Activated CD4-positive, alpha-beta T cell treated with anti-CD3 and anti-CD28 coated beads, Interleukin-2, amount 10 ng/mL, durations not matched to agents 24 days and 14 days (primary cell): ENCODE measurements at regions of chr15 and their contacts with region 1.

Region 1: DNA sequence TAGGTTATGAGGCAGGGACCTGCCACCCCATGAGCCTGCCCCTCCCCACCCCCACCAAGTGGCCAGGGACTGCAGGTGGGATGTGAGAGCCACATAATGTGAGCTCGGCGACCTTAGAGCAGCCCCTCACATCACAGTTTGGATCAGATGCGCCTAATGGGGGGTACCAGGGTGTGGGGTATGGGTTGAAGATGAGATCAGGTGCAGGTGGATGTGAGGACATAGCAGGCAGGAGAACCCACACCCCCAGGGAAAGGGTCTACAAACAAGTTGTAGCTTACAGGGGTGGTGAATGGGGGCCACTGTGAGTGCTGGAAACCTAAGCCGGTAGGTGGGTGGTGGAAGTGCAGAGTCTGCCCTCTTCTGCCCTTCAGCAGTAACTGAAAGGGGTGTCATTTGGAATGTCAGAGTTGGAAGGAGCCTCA is 94.0 kb downstream of the CORO2B start:
- DNase-seq: no peak
- H3K4me3 Mint-ChIP-seq: no peak overlapping the region
- H3K27ac Mint-ChIP-seq: no peak overlapping the region
- H3K4me1 Mint-ChIP-seq: peaks cover 3% of the 10 kb centered on the region
- H3K27me3 Mint-ChIP-seq: peaks cover 23% of the 10 kb centered on the region

Region 2: DNA sequence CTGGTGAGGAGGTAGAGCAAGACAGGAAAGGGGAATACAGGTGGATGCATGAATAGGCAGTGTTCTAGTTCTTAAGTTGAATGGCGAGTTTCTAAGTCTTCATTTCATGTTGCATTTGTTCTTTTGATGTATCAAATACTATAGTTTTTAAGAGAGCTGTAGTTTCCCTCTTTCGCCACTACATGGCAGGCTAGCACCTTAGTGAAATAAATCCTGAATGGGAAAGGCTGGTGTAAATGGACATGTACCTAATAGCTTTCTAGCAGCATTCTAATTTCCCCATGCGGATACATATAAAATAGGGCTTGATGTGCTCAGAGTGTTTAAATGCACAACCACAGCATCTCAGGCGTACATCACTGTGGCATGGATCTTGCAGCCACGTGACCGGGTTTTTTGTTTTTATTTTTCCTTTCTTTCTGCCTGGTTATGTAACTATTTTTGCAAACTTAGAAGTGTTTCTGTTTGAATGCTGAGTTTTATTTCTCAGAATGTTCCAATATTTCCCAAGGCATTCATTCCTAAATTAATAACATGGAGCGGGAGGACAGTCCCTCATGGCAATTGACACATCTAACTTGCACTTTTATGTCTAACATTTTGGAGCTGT is 419.8 kb before region 1 on chr15:
- intact Hi-C with region 1: loop called (anchors 10 kb)
- DNase-seq: peak; percentile 84
- H3K4me3 Mint-ChIP-seq: no peak overlapping the region
- H3K27ac Mint-ChIP-seq: no peak overlapping the region
- H3K4me1 Mint-ChIP-seq: peaks cover 8% of the 10 kb centered on the region
- H3K27me3 Mint-ChIP-seq: peaks cover 31% of the 10 kb centered on the region

Region 3: DNA sequence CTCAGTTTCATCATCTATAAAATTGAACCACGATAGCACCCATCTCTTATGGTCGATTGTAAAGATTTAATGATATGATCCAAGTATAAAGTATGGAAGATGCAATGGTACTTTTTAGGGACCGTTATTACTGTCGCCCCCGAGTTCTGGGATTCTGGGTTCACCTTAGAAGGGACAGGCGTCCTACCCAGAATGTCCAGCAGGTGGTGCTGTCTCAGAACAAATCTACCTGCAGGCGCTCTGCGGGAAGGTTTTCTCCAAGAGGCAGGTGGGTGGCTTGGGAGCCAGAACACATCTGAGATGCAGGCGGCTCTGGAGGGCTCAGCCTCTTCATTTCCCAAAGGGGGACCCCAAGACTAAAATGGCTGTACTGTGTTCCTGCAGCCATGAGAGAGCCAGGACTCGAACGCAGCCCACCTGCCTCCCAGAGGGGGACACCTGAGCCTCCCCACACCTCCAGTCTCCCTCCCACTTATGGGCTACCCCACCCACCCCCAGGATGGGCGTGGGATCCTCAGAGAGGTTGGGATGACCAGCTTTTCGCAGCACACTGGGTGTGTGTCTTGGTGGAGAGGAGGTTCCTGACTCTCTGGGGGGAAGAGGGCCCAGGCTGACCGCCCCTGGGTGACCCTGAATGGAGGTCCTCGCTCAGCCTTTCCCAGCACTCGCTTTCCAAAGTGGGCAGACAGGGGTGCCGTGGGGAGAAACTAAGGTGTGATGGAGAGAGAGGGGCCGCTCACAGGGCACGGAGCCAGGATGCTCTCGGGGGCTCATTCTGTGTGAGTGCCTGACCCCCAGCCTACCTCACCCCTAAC is 122.1 kb before region 1 on chr15:
- intact Hi-C with region 1: loop called (anchors 1 kb)
- DNase-seq: peak; percentile 92
- H3K4me3 Mint-ChIP-seq: no peak overlapping the region
- H3K27ac Mint-ChIP-seq: no peak overlapping the region
- H3K4me1 Mint-ChIP-seq: no peaks in the 10 kb centered on the region
- H3K27me3 Mint-ChIP-seq: peaks cover 39% of the 10 kb centered on the region